ENCODE measurements at regions of chr11 and their contacts with region 1.

Region 1: DNA sequence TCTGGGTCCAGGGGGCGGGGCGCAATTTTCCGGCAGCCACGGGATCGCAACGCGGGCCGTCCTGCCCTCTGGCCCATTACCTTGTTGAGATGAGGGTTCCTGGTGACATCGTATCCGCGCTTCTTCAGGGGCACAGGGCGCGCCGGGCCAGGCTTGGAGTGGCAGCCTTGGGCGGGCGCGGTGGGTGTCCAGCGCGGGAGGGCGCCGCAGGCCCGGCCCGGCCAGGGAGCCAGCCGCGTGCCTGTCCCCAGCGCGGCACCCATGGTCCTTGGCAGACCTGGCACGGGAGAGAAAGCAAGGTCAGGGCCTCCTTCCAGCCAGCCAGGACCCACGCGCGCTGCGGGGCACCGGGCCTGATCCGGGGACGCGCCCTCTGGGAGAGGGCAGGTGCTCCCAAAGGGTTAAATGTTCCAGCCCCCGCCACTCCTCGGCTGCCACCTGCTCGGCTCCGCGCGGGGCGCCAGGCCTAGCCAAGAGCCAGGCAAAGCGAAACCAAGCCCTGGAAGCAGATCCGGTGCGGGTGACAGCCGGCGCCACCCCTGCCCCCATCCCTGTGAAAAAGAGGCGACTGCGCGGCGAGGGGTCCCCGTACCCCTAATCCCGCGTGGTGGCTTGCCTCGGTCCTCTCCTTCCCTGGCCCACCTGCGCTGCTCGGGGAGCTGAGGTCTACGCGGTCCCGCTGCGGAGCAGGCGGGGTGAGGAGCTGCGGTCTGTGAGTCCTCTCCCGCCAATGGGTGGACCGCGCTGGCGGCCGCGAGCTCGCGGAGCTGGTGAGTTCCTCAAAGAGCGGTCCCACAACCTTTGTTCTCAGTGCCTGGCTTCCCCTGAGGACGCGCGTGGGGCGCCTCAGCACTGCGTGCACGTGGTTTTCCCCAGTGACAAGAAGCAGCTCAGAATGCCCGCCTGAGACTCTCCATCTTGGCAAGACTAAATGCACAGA is at the start of gene ME3:
- DNase-seq: peak; percentile 71
- H3K4me3 Mint-ChIP-seq: peak within 1 kb of the TSS; percentile 85
- H3K27ac Mint-ChIP-seq: peak within 1 kb of the TSS; percentile 85
- H3K4me1 Mint-ChIP-seq: peaks cover 33% of the 10 kb centered on the region
- H3K27me3 Mint-ChIP-seq: no peaks in the 10 kb centered on the region
- CTCF ChIP-seq: no peak
- total RNA-seq, gene ME3: 13.3 and 14.2 TPM in 2 replicates

Region 2: DNA sequence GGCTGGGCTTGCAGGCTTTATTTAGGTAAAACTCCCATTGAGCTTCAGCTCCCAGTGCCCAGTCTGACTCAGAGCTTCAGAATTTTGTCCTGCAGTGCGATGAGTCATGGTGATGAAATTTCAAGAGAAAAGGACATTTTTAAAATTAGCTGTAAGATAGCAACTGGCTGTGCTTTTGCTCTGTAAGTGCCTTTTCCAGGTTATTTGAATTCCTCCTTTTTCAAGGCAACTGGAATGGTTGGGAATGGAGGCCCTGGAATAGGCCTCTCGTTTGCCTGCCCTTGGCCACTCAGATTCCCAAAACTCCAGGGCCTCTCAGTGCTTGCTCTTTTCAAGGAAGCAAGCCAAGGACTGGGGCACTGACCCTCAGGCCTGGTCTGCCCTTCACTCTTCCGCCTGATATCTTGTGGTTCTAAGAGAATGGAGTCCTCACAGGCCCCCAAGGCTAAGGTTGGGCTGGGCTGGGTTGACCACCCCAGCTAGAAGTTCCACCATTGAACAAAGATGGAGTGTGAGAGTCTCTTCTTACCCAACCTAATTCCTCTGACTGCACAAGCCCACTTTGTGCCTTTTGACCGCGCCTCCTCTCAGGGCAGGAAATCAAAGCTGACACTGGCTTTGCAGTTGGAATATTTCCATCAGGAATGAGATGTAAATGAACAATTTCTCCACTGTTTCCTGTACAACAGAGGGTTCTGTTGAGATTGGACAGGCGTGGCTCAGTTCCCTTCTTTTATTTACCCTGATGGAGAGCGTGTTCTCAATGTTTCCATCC is 68.9 kb after region 1 on chr11:
- CTCF ChIA-PET with region 1: no interaction called
- intact Hi-C with region 1: loop called (anchors 5 kb)
- DNase-seq: peak; percentile 48
- H3K4me3 Mint-ChIP-seq: peak overlapping the region; percentile 45
- H3K27ac Mint-ChIP-seq: peak overlapping the region; percentile 95
- H3K4me1 Mint-ChIP-seq: peaks cover 71% of the 10 kb centered on the region
- H3K27me3 Mint-ChIP-seq: no peaks in the 10 kb centered on the region
- CTCF ChIP-seq: no peak

Measured in Calu3 (cell line).